HepG2 (cell line): ENCODE measurements at regions of chr4 and their contacts with region 1.

Region 1: GRCh38 chr4:182806259-182807252 is 110.6 kb downstream of the DCTD start:
- DNase-seq: peak; percentile 35
- ATAC-seq: peak; percentile 96
- H3K4me3 ChIP-seq: peak overlapping the region in 2 of 3 experiments; percentile 36 to 56; a peak in 4 of 6 replicates
- H3K27ac ChIP-seq: no peak overlapping the region
- H3K4me1 ChIP-seq: no peaks in the 10 kb centered on the region
- H3K27me3 ChIP-seq: 0 out of 5 replicates have a peak, but pooled peaks cover 0 to 2% of the 10 kb centered on the region in 2 experiments
- CTCF ChIP-seq: peak; percentile 97
- EP300 ChIP-seq: no peak
- POLR2A ChIP-seq: no peak
- RAD21 ChIP-seq: peak; percentile 87

Region 2: GRCh38 chr4:181569553-181569952 is 1237.0 kb before region 1 on chr4:
- CTCF ChIA-PET with region 1: interaction called, 3 read pairs
- POLR2A ChIA-PET with region 1: no interaction called
- in situ Hi-C with region 1: loop called (anchors 25 kb)
- intact Hi-C with region 1: no loop called
- DNase-seq: peak; percentile 9
- ATAC-seq: peak; percentile 82
- H3K4me3 ChIP-seq: no peak overlapping the region
- H3K27ac ChIP-seq: no peak overlapping the region
- H3K4me1 ChIP-seq: no peaks in the 10 kb centered on the region
- H3K27me3 ChIP-seq: no peaks in the 10 kb centered on the region
- CTCF ChIP-seq: peak; percentile 47
- EP300 ChIP-seq: no peak
- POLR2A ChIP-seq: no peak
- RAD21 ChIP-seq: no peak

Region 3: GRCh38 chr4:182478475-182478874 is 328.1 kb before region 1 on chr4:
- CTCF ChIA-PET with region 1: interaction called, 17 read pairs
- POLR2A ChIA-PET with region 1: no interaction called
- in situ Hi-C with region 1: loop called (anchors 10 kb)
- intact Hi-C with region 1: loop called (anchors 1 kb)
- DNase-seq: peak; percentile 29
- ATAC-seq: peak; percentile 64
- H3K4me3 ChIP-seq: no peak overlapping the region
- H3K27ac ChIP-seq: no peak overlapping the region
- H3K4me1 ChIP-seq: no peaks in the 10 kb centered on the region
- H3K27me3 ChIP-seq: no peaks in the 10 kb centered on the region
- CTCF ChIP-seq: peak; percentile 38; the same call in 1 of the 2 replicates
- EP300 ChIP-seq: no peak
- POLR2A ChIP-seq: no peak
- RAD21 ChIP-seq: no peak